ENCODE measurements at regions of chr2 and their contacts with region 1.

Region 1: GRCh38 chr2:178136321-178137025 is 24.2 kb downstream of the RBM45 start:
- DNase-seq: no peak
- H3K4me3 ChIP-seq: no peak overlapping the region
- H3K27ac ChIP-seq: no peak overlapping the region
- H3K4me1 ChIP-seq: no peaks in the 10 kb centered on the region
- H3K27me3 ChIP-seq: no peaks in the 10 kb centered on the region
- CTCF ChIP-seq: no peak

Region 2: GRCh38 chr2:178414266-178415247 is 278.1 kb after region 1 on chr2:
- intact Hi-C with region 1: loop called (anchors 10 kb)
- DNase-seq: peak; percentile 94 to 95
- H3K4me3 ChIP-seq: peak overlapping the region; percentile 58 to 66
- H3K27ac ChIP-seq: peak overlapping the region; percentile 88 to 94
- H3K4me1 ChIP-seq: peaks cover 0 to 11% (median 5%) of the 10 kb centered on the region in 4 donors
- H3K27me3 ChIP-seq: no peaks in the 10 kb centered on the region
- CTCF ChIP-seq: peak; percentile 86 to 87